Heart right ventricle (tissue), 16 donors: ENCODE measurements at regions of chr1 and their contacts with region 1.

Region 1: GRCh38 chr1:161792740-161793139 is 26.6 kb downstream of the ATF6 start:
- DNase-seq: peak in 1 of 2 donors; percentile 11
- ATAC-seq: peak in 7 of 8 donors; percentile 21 to 66 (median 45)
- H3K4me3 ChIP-seq: no peak overlapping the region
- H3K27ac ChIP-seq: no peak overlapping the region
- H3K4me1 ChIP-seq: no peaks in the 10 kb centered on the region
- H3K27me3 ChIP-seq: no peaks in the 10 kb centered on the region
- CTCF ChIP-seq: peak; percentile 16 to 75 (median 62)

Region 2: GRCh38 chr1:161549652-161550051 is 243.1 kb before region 1 on chr1 and contains the start of gene FCGR3A:
- intact Hi-C with region 1: no loop called
- DNase-seq: no peak
- ATAC-seq: peak in 1 of 8 donors; percentile 15
- H3K4me3 ChIP-seq: peak within 1 kb of the TSS in 1 of 10 donors; percentile 45
- H3K27ac ChIP-seq: peak within 1 kb of the TSS in 1 of 10 donors; percentile 87
- H3K4me1 ChIP-seq: peaks cover 0 to 9% (median 0%) of the 10 kb centered on the region in 9 donors
- H3K27me3 ChIP-seq: peaks cover 0 to 16% (median 0%) of the 10 kb centered on the region in 7 donors
- CTCF ChIP-seq: no peak
- total RNA-seq, gene FCGR3A: 1.9 to 120 (median 6.2) TPM

Region 3: DNA sequence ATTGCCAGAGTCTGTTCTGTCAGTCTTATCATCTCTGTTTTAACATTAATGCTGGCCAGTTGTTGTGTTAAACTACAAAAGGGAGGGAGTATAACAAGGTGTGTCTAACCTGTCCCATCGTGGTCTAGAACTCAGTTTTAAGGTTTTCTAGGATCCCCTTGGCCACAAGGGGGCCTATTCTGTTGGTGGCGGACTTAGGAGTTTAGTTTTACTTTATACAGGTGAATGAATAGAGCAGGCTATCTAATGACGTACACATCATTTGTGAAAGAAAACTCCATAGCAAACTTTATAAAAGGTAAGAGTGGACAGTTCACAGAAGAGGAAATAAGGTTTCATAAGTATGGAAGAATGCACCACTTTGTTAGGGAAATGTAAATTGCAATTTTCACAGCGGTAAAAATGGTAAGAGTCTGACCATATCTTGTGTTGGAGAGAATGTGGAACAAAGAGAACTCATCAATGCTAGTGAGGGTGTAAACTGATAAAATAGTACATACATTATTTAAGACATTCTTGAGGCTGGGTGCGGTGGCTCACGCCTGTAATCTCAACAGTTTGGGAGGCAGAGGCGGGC is 29.1 kb before region 1 on chr1:
- intact Hi-C with region 1: no loop called
- DNase-seq: no peak
- ATAC-seq: no peak
- H3K4me3 ChIP-seq: no peak overlapping the region
- H3K27ac ChIP-seq: no peak overlapping the region
- H3K4me1 ChIP-seq: peaks cover 0 to 34% (median 19%) of the 10 kb centered on the region in 9 donors
- H3K27me3 ChIP-seq: no peaks in the 10 kb centered on the region
- CTCF ChIP-seq: peak in 7 of 9 donors; percentile 21 to 56 (median 34)

Region 4: DNA sequence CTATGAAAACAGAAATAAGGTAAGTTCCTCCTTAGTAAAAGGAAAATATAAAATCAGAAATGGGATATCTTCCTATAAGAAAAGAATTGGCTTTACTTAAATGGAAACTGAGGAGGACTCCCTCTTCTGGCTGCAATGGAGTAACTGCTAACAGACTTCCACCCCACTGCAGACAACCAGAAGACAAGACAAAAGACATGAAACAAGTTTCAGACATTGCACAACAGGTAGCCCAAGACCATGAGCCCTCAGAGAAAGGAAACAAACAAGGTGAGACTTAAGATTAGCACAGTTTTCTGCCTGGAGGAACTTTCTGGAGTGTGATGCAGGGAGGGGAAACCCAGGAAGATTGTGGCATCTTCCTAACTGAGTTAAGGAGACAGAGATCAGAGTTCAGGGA is 247.9 kb after region 1 on chr1:
- intact Hi-C with region 1: loop called (anchors 1 to 5 kb)
- DNase-seq: no peak
- ATAC-seq: no peak
- H3K4me3 ChIP-seq: no peak overlapping the region
- H3K27ac ChIP-seq: no peak overlapping the region
- H3K4me1 ChIP-seq: peaks cover 0 to 3% (median 0%) of the 10 kb centered on the region in 9 donors
- H3K27me3 ChIP-seq: peaks cover 0 to 13% (median 0%) of the 10 kb centered on the region in 7 donors
- CTCF ChIP-seq: peak in 4 of 9 donors; percentile 16 to 44 (median 30)